ENCODE measurements at regions of chr11 and their contacts with region 1.

Region 1: DNA sequence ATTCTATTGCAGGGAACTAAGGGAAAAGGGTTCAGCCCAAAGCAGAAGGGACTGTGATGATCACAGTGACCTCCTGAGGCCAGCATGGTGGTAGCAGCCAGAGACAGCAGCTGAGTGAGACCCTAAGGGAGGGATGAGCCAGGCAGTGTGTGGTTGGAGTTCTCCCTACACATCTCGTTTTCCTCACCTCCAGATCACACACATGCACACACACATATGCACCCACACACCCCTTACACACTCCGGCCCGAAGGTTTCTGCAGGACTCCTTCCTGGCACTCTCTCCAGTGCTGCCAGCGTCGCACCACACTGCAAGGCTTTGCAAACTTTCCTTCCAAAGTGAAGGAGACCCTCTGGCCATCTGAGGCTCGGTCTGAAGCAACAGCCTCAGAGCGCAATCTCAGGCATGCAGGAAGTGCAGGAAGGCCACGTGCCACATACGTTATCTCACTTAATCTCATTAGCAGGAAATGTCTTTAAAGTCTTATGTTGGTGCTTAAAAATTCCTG is 26.8 kb upstream of the TP53I11 start:
- DNase-seq: no peak
- ATAC-seq: peak; percentile 74
- H3K4me3 Mint-ChIP-seq: no peak overlapping the region
- H3K27ac Mint-ChIP-seq: peak overlapping the region; percentile 32; the same call in 1 of the 2 replicates
- H3K4me1 Mint-ChIP-seq: peaks cover 18% of the 10 kb centered on the region
- H3K27me3 Mint-ChIP-seq: no peaks in the 10 kb centered on the region
- CTCF ChIP-seq: no peak

Region 2: GRCh38 chr11:44957040-44957515 is 20.5 kb before region 1 on chr11:
- CTCF ChIA-PET with region 1: interaction called, 19 read pairs
- POLR2A ChIA-PET with region 1: no interaction called
- DNase-seq: peak; percentile 52
- ATAC-seq: peak; percentile 18; the same call in 1 of the 2 replicates
- H3K4me3 Mint-ChIP-seq: peak overlapping the region; percentile 60
- H3K27ac Mint-ChIP-seq: no peak overlapping the region
- H3K4me1 Mint-ChIP-seq: peaks cover 80% of the 10 kb centered on the region
- H3K27me3 Mint-ChIP-seq: peaks cover 18% of the 10 kb centered on the region
- CTCF ChIP-seq: no peak

Region 3: DNA sequence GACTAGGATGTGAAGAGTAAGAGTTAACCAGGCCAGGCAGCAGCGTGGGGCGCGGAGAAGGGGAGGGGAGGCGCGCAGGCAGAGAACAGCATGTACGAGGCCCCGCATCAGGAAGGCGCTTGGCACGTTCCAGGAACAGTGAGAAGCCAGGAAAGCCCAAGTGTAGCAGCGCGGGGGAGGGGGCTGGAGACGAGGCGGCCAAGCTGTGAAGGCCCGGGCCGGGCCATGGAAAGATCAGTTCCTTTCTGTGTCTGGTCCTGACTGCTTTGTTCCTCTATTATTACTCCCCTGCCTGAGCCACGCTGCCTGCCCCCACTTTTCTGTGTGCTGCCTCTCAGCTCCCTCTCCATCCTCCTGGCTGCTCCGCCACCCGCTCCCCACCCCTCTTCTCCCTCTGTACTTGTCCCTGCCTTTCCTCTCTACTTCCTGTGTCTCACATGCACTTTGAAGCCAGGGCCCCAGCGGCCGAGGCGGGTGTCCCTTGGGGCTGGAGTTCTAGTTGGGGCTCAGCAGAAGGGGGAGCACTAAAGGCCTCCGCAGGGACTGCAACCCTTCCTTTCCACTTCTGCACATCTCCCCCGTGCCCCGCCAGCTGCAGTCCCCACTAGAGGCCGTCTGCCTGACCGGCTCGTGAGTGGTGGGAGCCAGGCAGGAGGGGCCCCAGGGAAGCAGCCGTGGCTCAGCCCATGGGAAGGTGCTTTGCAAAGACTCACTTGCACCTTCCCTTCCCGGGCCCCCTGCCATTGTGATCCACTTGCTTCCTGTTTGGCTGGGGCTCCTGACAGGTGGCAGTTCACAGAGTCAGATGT is 232.6 kb after region 1 on chr11:
- CTCF ChIA-PET with region 1: no interaction called
- POLR2A ChIA-PET with region 1: no interaction called
- DNase-seq: peak; percentile 72
- ATAC-seq: peak; percentile 76
- H3K4me3 Mint-ChIP-seq: no peak overlapping the region; the same call in 1 of the 2 replicates
- H3K27ac Mint-ChIP-seq: peak overlapping the region; percentile 73; the same call in 1 of the 2 replicates
- H3K4me1 Mint-ChIP-seq: peaks cover 21% of the 10 kb centered on the region
- H3K27me3 Mint-ChIP-seq: no peaks in the 10 kb centered on the region
- CTCF ChIP-seq: no peak